ENCODE measurements at regions of chr15 and their contacts with region 1.

Region 1: DNA sequence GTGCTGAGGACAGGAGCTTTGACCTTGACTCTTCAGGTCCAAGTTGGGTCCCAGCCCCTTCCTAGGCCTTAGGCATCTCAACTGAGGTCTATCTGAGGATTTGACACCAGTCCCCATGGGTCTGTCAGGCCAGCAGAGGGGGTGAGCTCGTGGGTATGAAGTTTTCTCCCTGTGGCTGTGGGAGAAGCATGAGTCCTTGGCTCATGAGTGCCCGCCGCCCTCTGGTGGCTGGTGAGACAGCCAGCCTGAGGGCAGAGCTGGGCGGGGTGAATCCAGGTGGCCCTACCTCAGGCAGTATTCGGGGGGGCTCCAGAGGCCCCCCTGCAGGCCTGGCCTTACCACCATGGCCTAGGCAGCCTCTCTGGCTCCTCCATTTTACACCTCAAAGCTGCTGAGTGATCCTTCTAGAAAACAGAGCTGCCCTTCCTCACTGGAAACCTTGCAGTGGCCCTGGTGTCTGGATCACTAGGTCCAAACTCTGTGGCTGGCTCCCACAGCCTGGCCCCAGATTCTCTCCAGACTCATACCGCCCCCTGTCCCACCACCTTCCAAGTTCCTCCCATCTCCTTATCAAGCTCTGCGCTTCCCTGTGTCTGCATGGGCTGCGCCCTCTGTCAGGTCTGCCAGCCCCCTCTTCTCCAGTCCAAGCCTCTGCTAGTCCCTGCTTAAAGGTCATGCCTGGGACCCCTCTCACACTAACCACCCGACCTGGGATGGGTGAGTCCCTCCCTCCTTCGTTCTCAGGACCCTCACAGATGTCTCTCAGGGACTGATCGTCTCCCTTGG is 16.1 kb downstream of the SH2D7 start:
- DNase-seq: peak; percentile 93 to 96 (median 96)
- H3K4me3 ChIP-seq: no peak overlapping the region
- H3K27ac ChIP-seq: no peak overlapping the region
- H3K4me1 ChIP-seq: peaks cover 2 to 27% (median 12%) of the 10 kb centered on the region in 4 experiments
- H3K27me3 ChIP-seq: no peaks in the 10 kb centered on the region

Region 2: DNA sequence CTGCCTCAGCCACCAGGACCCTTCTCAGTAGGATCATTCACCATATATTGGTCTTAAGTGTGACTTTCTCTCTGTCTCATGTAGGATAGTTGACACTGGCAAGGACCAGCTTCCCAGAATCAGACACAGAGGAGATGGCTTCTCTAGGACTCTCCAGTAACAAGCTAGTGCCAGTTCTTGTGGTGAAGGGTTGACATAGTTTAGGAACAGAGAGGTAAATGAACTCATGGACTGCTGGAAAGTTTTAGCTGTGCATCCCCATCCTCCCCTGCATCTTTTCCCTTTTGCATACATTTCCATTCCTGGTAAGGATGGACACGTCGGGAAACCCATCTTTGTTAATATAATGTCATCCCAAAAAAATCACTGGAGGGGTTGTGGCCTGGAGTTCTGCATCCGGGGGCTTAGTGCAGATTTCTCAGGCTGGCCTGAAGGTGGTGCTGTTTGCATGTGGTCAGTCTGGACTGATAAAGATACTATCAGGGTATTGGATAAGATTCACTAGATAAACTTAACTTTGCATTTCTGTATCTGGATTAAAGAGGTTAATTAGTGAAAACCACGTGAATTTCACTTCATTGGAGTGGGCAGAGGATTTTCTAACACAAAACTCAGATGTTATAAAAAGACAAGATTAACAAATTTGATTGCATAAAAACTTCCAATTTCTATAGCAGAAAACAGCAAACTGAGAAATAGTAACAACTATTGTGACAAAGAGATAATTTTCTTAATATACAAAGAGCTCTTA is 141.8 kb before region 1 on chr15:
- CTCF ChIA-PET with region 1: interaction called, 33 read pairs
- POLR2A ChIA-PET with region 1: no interaction called
- DNase-seq: peak in 1 of 3 donors; percentile 27
- H3K4me3 ChIP-seq: no peak overlapping the region
- H3K27ac ChIP-seq: no peak overlapping the region
- H3K4me1 ChIP-seq: peaks cover 0 to 19% (median 0%) of the 10 kb centered on the region in 4 experiments
- H3K27me3 ChIP-seq: no peaks in the 10 kb centered on the region

Region 3: GRCh38 chr15:78040653-78041244 is 67.7 kb before region 1 on chr15:
- CTCF ChIA-PET with region 1: interaction called, 11 read pairs
- POLR2A ChIA-PET with region 1: no interaction called
- DNase-seq: peak in 1 of 3 donors; percentile 31
- H3K4me3 ChIP-seq: no peak overlapping the region
- H3K27ac ChIP-seq: no peak overlapping the region
- H3K4me1 ChIP-seq: peaks cover 21 to 86% (median 64%) of the 10 kb centered on the region in 4 experiments
- H3K27me3 ChIP-seq: no peaks in the 10 kb centered on the region

Region 4: GRCh38 chr15:78082106-78083078 is 26.1 kb before region 1 on chr15:
- CTCF ChIA-PET with region 1: interaction called, 21 read pairs
- POLR2A ChIA-PET with region 1: no interaction called
- DNase-seq: no peak
- H3K4me3 ChIP-seq: no peak overlapping the region
- H3K27ac ChIP-seq: no peak overlapping the region
- H3K4me1 ChIP-seq: peaks cover 2 to 33% (median 20%) of the 10 kb centered on the region in 4 experiments
- H3K27me3 ChIP-seq: no peaks in the 10 kb centered on the region

Region 5: DNA sequence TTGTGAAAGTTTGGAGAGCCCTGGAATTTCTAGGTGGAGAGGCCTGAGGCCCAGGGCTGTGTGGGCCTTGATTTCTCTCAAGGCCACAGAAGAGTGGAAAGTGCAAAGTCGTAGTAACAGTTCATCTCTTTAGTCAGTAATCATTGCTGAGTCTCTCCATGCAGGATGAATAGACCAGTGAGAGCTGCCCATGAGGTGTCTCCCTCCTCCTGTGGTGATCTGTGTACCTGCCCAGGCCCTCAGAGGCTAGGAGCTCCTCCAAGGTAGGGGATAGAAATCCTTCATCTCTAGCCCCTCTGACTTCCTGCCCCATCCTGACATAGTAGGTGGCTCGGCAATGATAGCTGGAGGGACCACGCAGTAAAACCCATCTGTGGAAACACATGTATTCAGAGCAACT is 33.8 kb after region 1 on chr15:
- CTCF ChIA-PET with region 1: no interaction called
- POLR2A ChIA-PET with region 1: no interaction called
- DNase-seq: no peak
- H3K4me3 ChIP-seq: no peak overlapping the region
- H3K27ac ChIP-seq: no peak overlapping the region
- H3K4me1 ChIP-seq: no peaks in the 10 kb centered on the region
- H3K27me3 ChIP-seq: no peaks in the 10 kb centered on the region

Region 6: GRCh38 chr15:78177447-78177873 is 69.0 kb after region 1 on chr15:
- CTCF ChIA-PET with region 1: interaction called, 10 read pairs
- POLR2A ChIA-PET with region 1: no interaction called
- DNase-seq: peak in 2 of 3 donors; percentile 41 to 50
- H3K4me3 ChIP-seq: no peak overlapping the region
- H3K27ac ChIP-seq: no peak overlapping the region
- H3K4me1 ChIP-seq: peaks cover 11 to 33% (median 28%) of the 10 kb centered on the region in 4 experiments
- H3K27me3 ChIP-seq: no peaks in the 10 kb centered on the region

Region 7: DNA sequence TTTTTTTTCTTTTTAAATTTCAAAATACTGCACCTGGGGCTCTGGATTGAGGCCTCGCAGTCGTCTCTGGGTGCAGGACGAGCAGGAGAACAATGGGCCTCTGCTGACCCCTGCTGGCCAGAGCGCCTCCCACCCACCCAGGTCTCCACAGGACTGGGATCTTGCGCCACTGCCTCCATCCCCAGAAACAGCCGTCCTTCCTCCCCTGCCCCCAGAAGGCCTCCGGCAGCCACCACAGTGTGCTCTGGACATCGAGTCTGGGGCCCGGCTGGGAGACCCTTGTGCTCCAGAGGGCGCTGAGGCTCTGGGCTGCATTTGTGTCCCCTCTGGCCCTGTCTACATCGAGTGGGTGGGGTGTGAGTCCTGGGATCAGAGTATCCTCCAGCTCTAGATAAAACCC is 132.5 kb after region 1 on chr15:
- CTCF ChIA-PET with region 1: interaction called, 165 read pairs
- POLR2A ChIA-PET with region 1: no interaction called
- DNase-seq: peak; percentile 69 to 81 (median 76)
- H3K4me3 ChIP-seq: no peak overlapping the region
- H3K27ac ChIP-seq: no peak overlapping the region
- H3K4me1 ChIP-seq: peaks cover 0 to 7% (median 0%) of the 10 kb centered on the region in 4 experiments
- H3K27me3 ChIP-seq: peaks cover 0 to 4% (median 0%) of the 10 kb centered on the region in 5 experiments

Region 8: GRCh38 chr15:78671626-78672211 is 563.2 kb after region 1 on chr15:
- CTCF ChIA-PET with region 1: no interaction called
- POLR2A ChIA-PET with region 1: no interaction called
- DNase-seq: no peak
- H3K4me3 ChIP-seq: no peak overlapping the region
- H3K27ac ChIP-seq: no peak overlapping the region
- H3K4me1 ChIP-seq: no peaks in the 10 kb centered on the region
- H3K27me3 ChIP-seq: no peaks in the 10 kb centered on the region

Measured in common myeloid progenitor, CD34-positive (primary cell).